Transverse colon (tissue), 4 donors: ENCODE measurements at regions of chr13 and their contacts with region 1.

Region 1: DNA sequence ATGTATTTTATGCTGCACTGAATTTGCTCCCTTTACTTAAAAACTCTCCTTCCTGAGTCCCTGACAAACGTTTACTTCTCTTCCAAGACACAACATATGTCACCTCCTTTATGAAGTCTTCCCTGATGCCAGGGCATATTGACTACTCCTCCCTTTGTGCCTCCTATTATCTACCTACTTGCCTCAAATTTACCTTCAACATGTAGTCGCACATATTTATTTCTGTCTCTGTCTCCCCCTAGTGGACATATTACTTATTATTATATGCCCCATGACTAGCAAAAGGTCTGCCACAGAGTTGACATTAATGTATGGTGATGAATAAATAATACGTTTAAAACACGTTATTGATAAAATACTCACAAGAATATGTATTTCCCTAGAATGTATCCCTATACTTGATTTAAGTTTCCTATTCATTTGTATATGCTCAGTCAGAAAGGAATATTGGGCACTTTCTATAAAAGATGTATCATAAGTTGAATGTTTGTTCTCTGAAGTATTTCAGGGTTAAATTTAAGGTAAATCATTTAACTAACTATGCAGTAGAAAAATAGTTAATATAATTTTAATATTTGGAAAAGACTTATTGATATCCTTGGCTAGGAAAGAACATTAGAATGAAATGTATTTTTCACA is 250.3 kb upstream of the ATXN8OS start:
- DNase-seq: no peak
- H3K4me3 ChIP-seq: no peak overlapping the region
- H3K27ac ChIP-seq: no peak overlapping the region
- H3K4me1 ChIP-seq: no peaks in the 10 kb centered on the region
- H3K27me3 ChIP-seq: no peaks in the 10 kb centered on the region
- CTCF ChIP-seq: peak; percentile 58 to 69 (median 66)
- EP300 ChIP-seq: no peak
- POLR2A ChIP-seq: no peak

Region 2: GRCh38 chr13:69524459-69525155 is 332.7 kb before region 1 on chr13:
- in situ Hi-C with region 1: loop called in 1 of 4 experiments (anchors 25 kb)
- intact Hi-C with region 1: no loop called
- DNase-seq: no peak
- H3K4me3 ChIP-seq: no peak overlapping the region
- H3K27ac ChIP-seq: no peak overlapping the region
- H3K4me1 ChIP-seq: no peaks in the 10 kb centered on the region
- H3K27me3 ChIP-seq: no peaks in the 10 kb centered on the region
- CTCF ChIP-seq: peak in 1 of 5 experiments; percentile 5
- EP300 ChIP-seq: no peak
- POLR2A ChIP-seq: no peak

Region 3: GRCh38 chr13:69545551-69545950 is 311.8 kb before region 1 on chr13:
- in situ Hi-C with region 1: loop called in 3 of 4 experiments (anchors 10 to 25 kb)
- intact Hi-C with region 1: no loop called
- DNase-seq: no peak
- H3K4me3 ChIP-seq: no peak overlapping the region
- H3K27ac ChIP-seq: no peak overlapping the region
- H3K4me1 ChIP-seq: peaks cover 0 to 16% (median 5%) of the 10 kb centered on the region in 4 donors
- H3K27me3 ChIP-seq: no peaks in the 10 kb centered on the region
- CTCF ChIP-seq: no peak
- EP300 ChIP-seq: no peak
- POLR2A ChIP-seq: no peak

Region 4: DNA sequence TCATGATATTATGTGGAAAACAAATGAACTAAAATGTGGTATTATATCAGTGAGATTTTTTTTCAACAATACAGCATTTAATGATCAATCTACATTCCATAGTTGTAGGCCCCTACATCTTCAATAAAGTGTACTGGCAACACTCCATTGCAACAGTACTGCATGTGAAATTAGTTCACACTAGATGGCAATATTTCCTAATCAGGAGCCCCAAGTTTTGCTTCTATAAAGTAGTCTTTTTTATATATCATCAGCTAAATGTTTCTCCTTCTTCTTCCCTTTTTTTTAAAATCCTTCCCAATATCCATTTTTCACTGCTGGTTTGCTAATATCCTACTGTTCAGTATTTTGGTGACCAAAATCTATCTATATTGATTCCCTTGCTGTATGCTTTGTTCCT is 278.0 kb before region 1 on chr13:
- in situ Hi-C with region 1: loop called in 1 of 4 experiments (anchors 25 kb)
- intact Hi-C with region 1: no loop called
- DNase-seq: no peak
- H3K4me3 ChIP-seq: no peak overlapping the region
- H3K27ac ChIP-seq: no peak overlapping the region
- H3K4me1 ChIP-seq: no peaks in the 10 kb centered on the region
- H3K27me3 ChIP-seq: no peaks in the 10 kb centered on the region
- CTCF ChIP-seq: peak in 2 of 5 experiments; percentile 14 to 17
- EP300 ChIP-seq: no peak
- POLR2A ChIP-seq: no peak